ENCODE measurements at regions of chr9 and their contacts with region 1.

Region 1: GRCh38 chr9:121222524-121223171 is 21.0 kb upstream of the RAB14 start:
- DNase-seq: peak in 1 of 5 donors; percentile 18
- H3K4me3 ChIP-seq: no peak overlapping the region
- H3K27ac ChIP-seq: no peak overlapping the region
- H3K4me1 ChIP-seq: peaks cover 3% of the 10 kb centered on the region
- H3K27me3 ChIP-seq: no peaks in the 10 kb centered on the region
- CTCF ChIP-seq: peak; percentile 41 to 55 (median 48)
- EP300 ChIP-seq: no peak
- POLR2A ChIP-seq: no peak

Region 2: DNA sequence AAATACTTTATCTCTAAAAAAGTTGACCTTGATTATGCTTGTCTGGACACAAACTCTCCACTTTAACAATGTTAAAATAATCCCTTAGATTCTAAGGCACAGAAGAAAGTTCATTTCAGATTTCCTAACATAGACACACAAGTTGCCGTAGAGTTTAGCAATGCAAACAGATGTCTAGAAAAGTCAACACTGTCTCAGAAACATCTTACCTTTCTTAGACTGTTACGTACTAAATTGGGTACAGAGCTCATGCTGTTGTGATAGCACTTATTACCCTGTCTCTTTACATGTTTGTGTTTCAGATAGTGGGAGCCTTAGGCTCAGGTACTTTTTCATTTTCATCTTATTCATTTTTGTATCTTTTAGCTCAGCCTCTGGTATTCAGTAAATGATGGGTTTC is 224.5 kb before region 1 on chr9:
- intact Hi-C with region 1: no loop called
- DNase-seq: no peak
- H3K4me3 ChIP-seq: no peak overlapping the region
- H3K27ac ChIP-seq: no peak overlapping the region
- H3K4me1 ChIP-seq: no peaks in the 10 kb centered on the region
- H3K27me3 ChIP-seq: no peaks in the 10 kb centered on the region
- CTCF ChIP-seq: no peak
- EP300 ChIP-seq: no peak
- POLR2A ChIP-seq: no peak

Region 3: GRCh38 chr9:121383715-121384114 is 161.1 kb after region 1 on chr9:
- intact Hi-C with region 1: loop called in 1 of 4 experiments (anchors 5 kb)
- DNase-seq: no peak
- H3K4me3 ChIP-seq: no peak overlapping the region
- H3K27ac ChIP-seq: no peak overlapping the region
- H3K4me1 ChIP-seq: no peaks in the 10 kb centered on the region
- H3K27me3 ChIP-seq: no peaks in the 10 kb centered on the region
- CTCF ChIP-seq: no peak
- EP300 ChIP-seq: no peak
- POLR2A ChIP-seq: no peak

Region 4: GRCh38 chr9:121393318-121393717 is 170.7 kb after region 1 on chr9:
- intact Hi-C with region 1: loop called in 2 of 4 experiments (anchors 5 kb)
- DNase-seq: no peak
- H3K4me3 ChIP-seq: no peak overlapping the region
- H3K27ac ChIP-seq: no peak overlapping the region
- H3K4me1 ChIP-seq: no peaks in the 10 kb centered on the region
- H3K27me3 ChIP-seq: no peaks in the 10 kb centered on the region
- CTCF ChIP-seq: no peak
- EP300 ChIP-seq: no peak
- POLR2A ChIP-seq: no peak

Region 5: DNA sequence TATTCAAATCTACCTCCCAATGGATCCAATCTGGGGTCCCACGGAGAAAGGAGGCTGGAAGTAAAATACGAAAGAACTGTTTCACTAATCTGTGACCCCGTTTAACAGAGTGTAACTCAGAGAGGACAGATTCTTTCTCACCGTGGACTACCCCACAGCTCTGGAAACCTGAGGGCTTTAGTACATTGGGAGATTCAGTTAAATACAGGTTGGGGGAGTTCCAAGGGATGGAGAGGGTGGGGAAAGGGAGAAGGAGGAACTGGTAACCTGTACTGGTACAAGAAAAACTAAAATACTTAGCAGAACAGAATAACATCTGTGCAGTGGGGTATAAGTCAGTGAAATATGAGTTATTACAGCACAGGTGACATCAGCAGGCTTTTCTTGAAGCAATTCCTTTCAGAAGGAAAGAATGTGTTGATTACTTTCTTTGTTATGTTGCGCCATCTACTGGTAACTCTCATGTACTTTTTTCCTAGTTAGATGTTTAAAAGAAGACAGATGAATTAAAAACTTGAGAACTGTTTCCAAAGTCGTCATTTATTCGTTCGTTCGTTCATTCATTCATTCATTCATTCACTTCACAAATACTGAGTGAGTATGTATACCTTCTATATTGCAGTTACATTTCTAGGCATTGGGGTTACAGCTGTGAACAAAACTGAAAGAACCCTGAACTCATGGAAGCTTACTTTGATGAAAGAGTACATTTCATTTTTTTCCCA is 177.4 kb after region 1 on chr9:
- intact Hi-C with region 1: loop called in 1 of 4 experiments (anchors 5 kb)
- DNase-seq: no peak
- H3K4me3 ChIP-seq: no peak overlapping the region
- H3K27ac ChIP-seq: no peak overlapping the region
- H3K4me1 ChIP-seq: no peaks in the 10 kb centered on the region
- H3K27me3 ChIP-seq: no peaks in the 10 kb centered on the region
- CTCF ChIP-seq: peak; percentile 63 to 79 (median 72)
- EP300 ChIP-seq: no peak
- POLR2A ChIP-seq: no peak

Measured in ovary (tissue), 10 donors.